Right cardiac atrium (tissue), 5 donors: ENCODE measurements at regions of chr11 and their contacts with region 1.

Region 1: DNA sequence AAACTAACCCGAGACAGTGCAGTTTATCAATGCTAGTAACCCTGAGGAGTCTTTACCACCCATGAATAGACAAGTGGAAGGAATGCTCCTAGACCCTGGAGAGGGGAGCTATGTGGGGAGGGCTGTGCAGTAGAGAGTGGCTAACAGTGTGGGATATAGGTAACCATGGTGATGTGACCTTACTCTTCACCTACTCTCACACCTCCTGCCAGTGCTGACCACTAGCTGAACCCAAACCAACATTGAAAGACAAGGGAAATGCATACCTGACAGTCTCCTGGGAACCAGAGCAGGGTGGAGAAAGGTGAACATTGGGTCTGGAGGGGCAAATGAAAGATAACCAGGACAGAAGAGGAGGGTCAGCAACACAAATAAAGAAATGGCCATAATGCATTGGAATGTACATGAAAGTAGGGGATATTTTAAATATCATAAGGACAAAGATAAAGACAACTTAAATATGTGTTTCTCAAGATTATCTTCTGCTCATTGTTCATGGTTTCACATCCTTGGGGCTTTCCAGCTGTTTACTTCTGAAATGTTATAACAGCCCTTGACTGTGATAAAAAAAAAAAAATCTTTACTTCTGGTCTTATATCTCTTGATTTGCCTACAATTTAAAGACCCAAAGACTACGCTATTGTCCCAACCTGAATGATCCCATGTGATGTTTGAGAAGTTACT is 983.3 kb upstream of the TENM4 start:
- DNase-seq: no peak
- ATAC-seq: no peak
- H3K4me3 ChIP-seq: no peak overlapping the region
- H3K27ac ChIP-seq: no peak overlapping the region
- H3K4me1 ChIP-seq: no peaks in the 10 kb centered on the region
- H3K27me3 ChIP-seq: no peaks in the 10 kb centered on the region

Region 2: DNA sequence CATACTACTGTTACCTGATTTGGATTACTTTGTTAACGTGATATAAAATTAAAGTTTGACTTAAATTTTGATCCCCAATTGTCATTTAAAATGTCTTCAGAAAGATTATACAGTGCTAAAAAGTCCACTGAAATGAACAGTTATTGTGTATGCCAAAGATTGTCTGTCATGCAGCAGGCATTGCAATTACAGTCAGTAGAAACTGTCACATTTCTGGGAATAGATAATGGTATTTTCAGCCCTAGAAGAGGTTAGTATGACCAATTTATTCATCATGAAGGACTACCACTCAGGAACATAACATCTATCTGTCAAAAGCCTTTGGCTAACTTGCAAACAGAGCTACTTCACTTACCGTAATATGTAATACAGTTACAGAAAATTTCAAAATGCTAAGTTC is 130.9 kb before region 1 on chr11:
- intact Hi-C with region 1: no loop called
- DNase-seq: no peak
- ATAC-seq: no peak
- H3K4me3 ChIP-seq: no peak overlapping the region
- H3K27ac ChIP-seq: no peak overlapping the region
- H3K4me1 ChIP-seq: no peaks in the 10 kb centered on the region
- H3K27me3 ChIP-seq: no peaks in the 10 kb centered on the region

Region 3: GRCh38 chr11:80379620-80380235 is 44.4 kb before region 1 on chr11:
- intact Hi-C with region 1: loop called in 1 of 4 experiments (anchors 10 kb)
- DNase-seq: no peak
- ATAC-seq: no peak
- H3K4me3 ChIP-seq: no peak overlapping the region
- H3K27ac ChIP-seq: no peak overlapping the region
- H3K4me1 ChIP-seq: no peaks in the 10 kb centered on the region
- H3K27me3 ChIP-seq: no peaks in the 10 kb centered on the region